Heart right ventricle (tissue), 16 donors: ENCODE measurements at regions of chr6 and their contacts with region 1.

Region 1: DNA sequence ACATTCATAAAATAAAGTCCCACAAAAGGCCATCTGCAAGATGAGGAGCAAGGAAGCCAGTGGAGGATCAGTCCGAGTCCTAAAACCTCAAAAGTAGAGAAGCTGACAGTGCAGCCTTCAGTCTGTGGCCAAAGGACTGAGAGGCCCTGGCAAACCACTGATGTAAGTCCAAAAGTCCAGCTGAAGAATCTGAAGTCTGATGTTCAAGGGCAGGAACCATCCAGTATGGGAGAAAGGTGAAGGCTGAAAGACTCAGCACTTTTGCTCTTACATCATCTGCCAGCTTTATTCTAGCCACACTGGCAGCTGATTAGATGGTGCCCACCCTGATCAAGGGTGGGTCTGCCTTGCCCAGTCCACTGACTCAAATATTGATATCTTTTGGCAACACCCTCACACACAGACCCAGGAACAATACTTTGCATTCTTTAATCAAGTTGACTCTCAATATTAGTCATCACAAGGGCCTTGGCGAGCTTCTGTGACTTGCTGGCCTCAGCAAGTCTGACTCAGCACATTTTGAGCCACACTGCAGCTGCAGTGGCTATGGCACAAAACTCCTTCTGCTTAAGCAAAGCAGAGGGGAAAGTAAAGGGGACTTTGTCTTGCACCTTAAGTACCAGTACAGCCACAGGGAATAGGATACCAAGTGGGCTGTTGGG is 1370.3 kb upstream of the CITED2 start:
- DNase-seq: no peak
- ATAC-seq: peak in 1 of 8 donors; percentile 56
- H3K4me3 ChIP-seq: no peak overlapping the region
- H3K27ac ChIP-seq: no peak overlapping the region
- H3K4me1 ChIP-seq: no peaks in the 10 kb centered on the region
- H3K27me3 ChIP-seq: no peaks in the 10 kb centered on the region
- CTCF ChIP-seq: no peak

Region 2: DNA sequence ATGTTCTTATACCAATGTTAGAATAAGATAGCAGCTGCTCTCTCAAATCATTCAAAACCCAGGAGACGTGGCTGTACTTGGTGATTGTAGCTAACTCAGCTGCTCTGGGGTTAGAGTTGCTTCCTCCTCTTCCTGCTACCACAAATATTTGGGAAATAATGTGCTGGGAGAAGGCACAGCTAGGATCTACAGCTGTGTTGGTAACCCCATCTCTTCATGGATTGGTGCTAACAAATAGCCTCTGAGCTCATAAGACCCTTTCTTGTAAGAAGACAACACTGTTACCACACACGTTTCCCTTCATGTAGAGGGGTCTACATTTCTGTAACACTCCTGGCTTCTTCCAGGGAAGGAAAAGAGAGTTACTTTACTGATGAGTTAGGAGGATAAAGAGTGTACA is 459.3 kb before region 1 on chr6:
- intact Hi-C with region 1: loop called in 1 of 10 experiments (anchors 10 kb)
- DNase-seq: no peak
- ATAC-seq: peak in 3 of 8 donors; percentile 44 to 72 (median 69)
- H3K4me3 ChIP-seq: no peak overlapping the region
- H3K27ac ChIP-seq: peak overlapping the region in 2 of 10 donors; percentile 8 to 18
- H3K4me1 ChIP-seq: peaks cover 0 to 17% (median 7%) of the 10 kb centered on the region in 9 donors
- H3K27me3 ChIP-seq: no peaks in the 10 kb centered on the region
- CTCF ChIP-seq: no peak